ENCODE measurements at regions of chr9 and their contacts with region 1.

Region 1: GRCh38 chr9:86405926-86406325 is 51.7 kb upstream of the TUT7 start:
- DNase-seq: peak; percentile 53
- ATAC-seq: peak; percentile 65
- H3K4me3 ChIP-seq: peak overlapping the region in 2 of 3 experiments; percentile 32 to 47; a peak in 3 of 6 replicates
- H3K27ac ChIP-seq: peak overlapping the region; percentile 59
- H3K4me1 ChIP-seq: peaks cover 63% of the 10 kb centered on the region
- H3K27me3 ChIP-seq: no peaks in the 10 kb centered on the region
- CTCF ChIP-seq: no peak
- EP300 ChIP-seq: 0 out of 4 replicates have a peak, but pooled peaks of 1 of the 2 experiments have one; percentile 15
- POLR2A ChIP-seq: no peak
- RAD21 ChIP-seq: no peak

Region 2: DNA sequence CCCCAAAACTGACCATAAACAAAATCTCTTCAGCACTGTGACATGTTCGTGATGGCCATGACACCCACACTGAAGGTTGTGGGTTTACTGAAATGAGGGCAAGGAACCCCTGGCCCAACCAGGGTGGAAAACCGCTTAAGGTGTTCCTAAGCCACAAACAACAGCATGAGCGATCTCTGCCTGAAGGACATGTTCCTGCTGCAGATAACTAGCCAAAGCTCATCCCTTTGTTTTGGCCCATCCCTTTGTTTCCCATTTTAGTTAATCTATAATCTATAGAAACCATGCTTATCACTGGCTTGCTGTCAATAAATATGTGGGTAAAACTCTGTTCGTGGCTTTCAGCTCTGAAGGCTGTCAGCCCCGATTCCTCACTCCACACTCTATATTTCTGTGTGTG is 29.9 kb before region 1 on chr9:
- CTCF ChIA-PET with region 1: no interaction called
- POLR2A ChIA-PET with region 1: no interaction called
- in situ Hi-C with region 1: no loop called
- intact Hi-C with region 1: no loop called
- DNase-seq: no peak
- ATAC-seq: no peak
- H3K4me3 ChIP-seq: no peak overlapping the region
- H3K27ac ChIP-seq: no peak overlapping the region
- H3K4me1 ChIP-seq: no peaks in the 10 kb centered on the region
- H3K27me3 ChIP-seq: no peaks in the 10 kb centered on the region
- CTCF ChIP-seq: no peak
- EP300 ChIP-seq: no peak
- POLR2A ChIP-seq: no peak
- RAD21 ChIP-seq: no peak

Region 3: DNA sequence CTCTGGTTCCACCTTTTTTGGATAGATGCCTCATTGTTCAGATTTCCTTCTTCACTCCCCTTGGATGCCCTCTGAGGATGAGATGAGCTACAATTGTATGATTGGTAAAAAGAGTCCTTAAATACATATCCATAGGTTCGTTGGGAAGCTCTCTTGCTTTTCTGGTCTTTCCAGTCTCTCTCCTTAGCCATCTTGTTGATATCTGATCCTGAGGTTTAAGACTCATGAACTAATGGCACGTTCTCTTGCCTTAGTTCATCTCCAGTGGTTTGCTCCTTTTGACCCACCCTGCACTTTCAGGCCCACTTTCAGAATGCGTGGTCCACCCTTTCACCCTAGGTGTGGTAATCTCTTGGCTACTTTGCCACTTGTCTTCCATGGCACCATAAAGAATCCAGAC is 18.5 kb before region 1 on chr9:
- CTCF ChIA-PET with region 1: no interaction called
- POLR2A ChIA-PET with region 1: interaction called, 10 read pairs
- in situ Hi-C with region 1: no loop called
- intact Hi-C with region 1: no loop called
- DNase-seq: no peak
- ATAC-seq: no peak
- H3K4me3 ChIP-seq: no peak overlapping the region
- H3K27ac ChIP-seq: no peak overlapping the region
- H3K4me1 ChIP-seq: peaks cover 19% of the 10 kb centered on the region
- H3K27me3 ChIP-seq: no peaks in the 10 kb centered on the region; a peak in 1 of 5 replicates
- CTCF ChIP-seq: no peak
- EP300 ChIP-seq: no peak
- POLR2A ChIP-seq: no peak
- RAD21 ChIP-seq: no peak

Measured in HepG2 (cell line).